MCF 10A (cell line): ENCODE measurements at regions of chr5 and their contacts with region 1.

Region 1: DNA sequence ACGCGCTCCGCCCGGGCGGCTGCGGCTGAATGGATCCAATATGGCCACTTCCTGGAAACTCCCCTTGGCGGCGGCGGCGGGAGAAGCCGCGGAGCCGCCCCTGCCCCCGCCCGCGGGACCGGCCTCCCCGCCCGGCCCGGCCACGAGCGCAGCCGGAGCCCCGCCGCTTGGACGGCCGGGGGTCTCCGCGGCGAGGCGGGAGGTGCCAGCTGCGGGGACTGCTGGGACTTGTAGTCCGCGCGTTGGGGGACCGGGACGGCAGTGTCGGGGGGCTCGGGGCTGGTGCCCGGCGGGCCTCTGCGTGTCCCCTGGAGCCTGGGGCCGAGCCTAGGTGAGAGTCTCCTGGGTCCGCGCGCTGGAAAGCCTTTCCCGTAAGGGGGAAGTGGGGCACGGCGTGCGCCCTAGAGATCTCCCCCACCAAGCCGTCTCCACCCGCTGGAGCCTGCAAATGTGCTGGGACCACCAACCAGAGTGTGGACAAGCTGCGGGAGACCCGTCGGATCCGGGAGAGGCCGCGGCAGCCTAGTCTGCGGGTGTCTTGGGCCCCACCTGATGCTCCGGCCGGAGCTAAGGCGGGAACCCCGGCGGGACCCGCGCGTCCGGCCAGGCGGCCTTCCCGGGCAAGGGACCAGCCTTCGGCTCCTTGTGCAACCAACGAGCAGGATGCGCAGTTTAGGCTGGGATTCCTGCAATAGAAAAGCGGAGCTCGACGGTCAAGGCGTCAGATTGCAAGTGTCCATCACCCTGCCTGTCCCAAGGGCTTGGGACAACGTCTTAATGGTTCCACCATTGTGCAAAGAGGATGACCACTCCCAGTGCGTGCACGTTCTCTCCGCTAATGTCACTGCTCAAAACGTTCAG is at the start of gene SEPTIN8:
- DNase-seq: peak; percentile 55
- H3K4me3 Mint-ChIP-seq: peak within 1 kb of the TSS; percentile 73
- H3K27ac Mint-ChIP-seq: peak within 1 kb of the TSS; percentile 28
- H3K4me1 Mint-ChIP-seq: peaks cover 32% of the 10 kb centered on the region
- H3K27me3 Mint-ChIP-seq: no peaks in the 10 kb centered on the region
- CTCF ChIP-seq: no peak
- total RNA-seq, gene SEPTIN8: 34.8 and 53.1 TPM in 2 replicates

Region 2: GRCh38 chr5:132655821-132656773 is 121.3 kb before region 1 on chr5:
- CTCF ChIA-PET with region 1: no interaction called
- POLR2A ChIA-PET with region 1: no interaction called
- intact Hi-C with region 1: no loop called
- DNase-seq: no peak
- H3K4me3 Mint-ChIP-seq: no peak overlapping the region
- H3K27ac Mint-ChIP-seq: no peak overlapping the region
- H3K4me1 Mint-ChIP-seq: no peaks in the 10 kb centered on the region
- H3K27me3 Mint-ChIP-seq: no peaks in the 10 kb centered on the region
- CTCF ChIP-seq: no peak

Region 3: DNA sequence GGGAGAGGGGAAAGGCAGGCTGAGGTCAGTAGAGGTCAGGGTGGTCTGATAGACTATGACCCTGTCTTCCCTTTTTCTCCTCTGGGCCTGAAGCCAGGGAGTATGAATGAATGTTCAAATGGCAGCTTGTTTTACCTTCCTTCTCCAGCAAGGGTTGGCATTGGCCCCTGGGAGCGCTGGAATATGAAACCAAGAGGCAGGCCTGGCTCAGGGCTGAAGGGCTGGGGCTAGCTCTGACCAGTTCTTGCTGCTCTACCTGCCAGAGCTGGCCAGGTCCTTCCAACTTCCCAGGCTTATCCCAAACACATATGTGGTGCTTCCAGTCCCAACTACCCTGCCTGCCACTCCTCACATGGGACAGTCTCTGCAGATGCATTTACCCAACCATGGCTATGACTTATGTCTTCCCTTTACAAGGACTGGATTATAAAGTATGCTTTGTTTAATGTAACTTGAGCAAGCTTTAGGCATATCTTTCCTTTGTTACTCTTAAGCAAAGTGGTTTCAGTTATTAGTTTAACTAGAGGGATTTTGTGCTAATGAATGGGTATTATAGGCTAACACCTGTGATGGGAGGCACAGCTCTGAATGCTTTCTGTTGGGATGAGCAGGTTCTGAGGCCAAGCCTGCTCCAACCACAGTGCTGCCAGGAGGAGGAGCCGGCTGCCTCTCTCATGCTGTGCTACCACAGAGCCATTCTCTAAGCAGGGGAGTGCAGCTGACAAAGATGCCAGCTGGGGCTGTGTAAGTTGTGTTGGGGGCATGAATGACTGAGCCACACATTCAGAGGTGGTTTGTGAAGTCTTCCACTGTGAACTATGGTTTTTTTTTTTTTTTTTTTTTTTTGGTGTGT is 24.1 kb before region 1 on chr5:
- CTCF ChIA-PET with region 1: interaction called, 4 read pairs
- POLR2A ChIA-PET with region 1: interaction called, 11 read pairs
- intact Hi-C with region 1: no loop called
- DNase-seq: peak; percentile 37
- H3K4me3 Mint-ChIP-seq: no peak overlapping the region
- H3K27ac Mint-ChIP-seq: no peak overlapping the region
- H3K4me1 Mint-ChIP-seq: no peaks in the 10 kb centered on the region
- H3K27me3 Mint-ChIP-seq: no peaks in the 10 kb centered on the region
- CTCF ChIP-seq: peak; percentile 16

Region 4: GRCh38 chr5:132767150-132767549 is 10.3 kb before region 1 on chr5:
- CTCF ChIA-PET with region 1: interaction called, 3 read pairs
- POLR2A ChIA-PET with region 1: interaction called, 10 read pairs
- intact Hi-C with region 1: no loop called
- DNase-seq: no peak
- H3K4me3 Mint-ChIP-seq: no peak overlapping the region
- H3K27ac Mint-ChIP-seq: no peak overlapping the region
- H3K4me1 Mint-ChIP-seq: no peaks in the 10 kb centered on the region
- H3K27me3 Mint-ChIP-seq: no peaks in the 10 kb centered on the region
- CTCF ChIP-seq: no peak

Region 5: GRCh38 chr5:132797651-132798050 is 20.2 kb after region 1 on chr5:
- CTCF ChIA-PET with region 1: interaction called, 11 read pairs
- POLR2A ChIA-PET with region 1: interaction called, 14 read pairs
- intact Hi-C with region 1: no loop called
- DNase-seq: no peak
- H3K4me3 Mint-ChIP-seq: no peak overlapping the region
- H3K27ac Mint-ChIP-seq: no peak overlapping the region
- H3K4me1 Mint-ChIP-seq: peaks cover 6% of the 10 kb centered on the region
- H3K27me3 Mint-ChIP-seq: no peaks in the 10 kb centered on the region
- CTCF ChIP-seq: no peak

Region 6: GRCh38 chr5:133825631-133826289 is 1048.3 kb after region 1 on chr5:
- CTCF ChIA-PET with region 1: no interaction called
- POLR2A ChIA-PET with region 1: no interaction called
- intact Hi-C with region 1: no loop called
- DNase-seq: no peak
- H3K4me3 Mint-ChIP-seq: no peak overlapping the region
- H3K27ac Mint-ChIP-seq: no peak overlapping the region
- H3K4me1 Mint-ChIP-seq: peaks cover 7% of the 10 kb centered on the region
- H3K27me3 Mint-ChIP-seq: peaks cover 27% of the 10 kb centered on the region
- CTCF ChIP-seq: no peak